Left ventricle myocardium superior (tissue), 1 donor: ENCODE measurements at regions of chr1 and their contacts with region 1.

Region 1: DNA sequence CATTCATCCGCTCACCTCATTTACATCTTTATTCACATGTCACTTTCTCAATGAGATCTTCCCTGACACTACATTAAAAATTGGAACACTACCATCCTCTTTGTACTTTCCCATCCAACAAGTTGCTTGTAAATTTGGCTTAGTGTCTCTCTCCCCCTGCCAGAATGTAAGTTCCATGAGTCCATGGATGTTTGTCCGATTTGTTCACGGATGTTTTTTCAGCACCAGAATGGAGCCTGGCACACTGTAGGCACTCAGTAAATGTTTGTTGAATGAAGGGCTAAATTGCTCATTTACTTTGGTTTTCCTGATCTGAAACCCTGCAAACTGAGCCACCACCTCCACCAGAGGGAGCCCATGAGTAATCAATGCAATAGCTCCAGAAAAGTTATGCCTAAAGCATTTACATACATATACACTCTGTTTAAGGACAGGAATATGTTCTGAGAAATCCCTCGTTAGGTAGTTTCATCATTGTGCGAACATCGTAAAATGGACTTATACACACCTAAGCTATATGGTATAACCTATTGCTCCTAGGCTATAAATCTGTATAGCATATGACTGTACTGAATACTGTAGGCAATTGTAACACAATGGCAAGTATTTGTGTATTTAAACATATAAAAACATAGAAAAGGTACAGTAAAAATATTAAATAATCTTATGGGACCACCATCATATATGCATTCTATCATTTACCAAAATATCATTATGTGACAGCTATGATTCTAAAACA is 2.8 kb upstream of the EYA3 start:
- DNase-seq: peak; percentile 75
- ATAC-seq: no peak

Region 2: GRCh38 chr1:28028873-28029654 is 62.1 kb before region 1 on chr1:
- intact Hi-C with region 1: no loop called
- DNase-seq: no peak
- ATAC-seq: no peak

Region 3: DNA sequence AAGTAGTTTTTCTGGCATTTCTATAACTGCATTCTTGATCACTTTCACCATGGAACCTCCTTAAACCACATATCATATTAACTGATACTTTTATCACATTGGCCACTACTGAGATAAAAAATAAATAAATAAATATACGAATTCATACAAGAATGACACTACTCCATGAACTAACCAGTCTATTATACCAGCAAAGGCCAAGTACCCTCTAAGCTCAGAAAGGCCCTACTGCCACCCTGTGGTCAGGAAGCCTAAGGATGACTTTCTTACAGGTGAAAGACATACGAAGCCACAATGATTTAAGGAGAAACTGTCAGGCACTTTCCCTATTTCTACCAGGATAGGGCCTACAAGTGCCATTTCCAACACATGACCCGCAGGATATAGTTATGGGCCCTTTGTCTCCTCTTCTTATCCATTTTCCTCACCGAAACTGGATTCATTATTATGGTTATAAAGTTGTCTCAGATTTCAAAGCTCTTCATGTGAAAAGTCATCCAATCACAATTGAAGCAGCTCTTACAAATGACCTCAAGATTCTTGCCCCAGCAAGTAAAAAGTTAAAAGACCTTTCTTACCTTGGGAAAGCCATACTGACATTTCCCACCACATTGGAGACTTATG is 117.7 kb after region 1 on chr1:
- intact Hi-C with region 1: loop called (anchors 5 kb)
- DNase-seq: peak; percentile 53
- ATAC-seq: peak; percentile 82